CD14-positive monocyte (primary cell): ENCODE measurements at regions of chr10 and their contacts with region 1.

Region 1: GRCh38 chr10:30722956-30723620 is 93.5 kb upstream of the LYZL2 start:
- DNase-seq: no peak
- H3K4me3 ChIP-seq: no peak overlapping the region
- H3K4me3 Mint-ChIP-seq: no peak overlapping the region
- H3K27ac ChIP-seq: no peak overlapping the region
- H3K27ac Mint-ChIP-seq: no peak overlapping the region
- H3K4me1 ChIP-seq: peaks cover 4 to 7% of the 10 kb centered on the region in 2 donors
- H3K4me1 Mint-ChIP-seq: peaks cover 23% of the 10 kb centered on the region
- H3K27me3 ChIP-seq: no peaks in the 10 kb centered on the region
- H3K27me3 Mint-ChIP-seq: peaks cover 0 to 6% (median 3%) of the 10 kb centered on the region in 3 donors
- CTCF ChIP-seq: no peak

Region 2: GRCh38 chr10:31808258-31809218 is 1085.5 kb after region 1 on chr10:
- intact Hi-C with region 1: loop called in 1 of 2 experiments (anchors 5 kb)
- DNase-seq: peak; percentile 30 to 50 (median 42)
- H3K4me3 ChIP-seq: peak overlapping the region; percentile 49 to 91 (median 72)
- H3K4me3 Mint-ChIP-seq: peak overlapping the region; percentile 67 to 90
- H3K27ac ChIP-seq: peak overlapping the region in 1 of 2 donors; percentile 67
- H3K27ac Mint-ChIP-seq: peak overlapping the region in 6 of 7 donors; percentile 61 to 93 (median 82)
- H3K4me1 ChIP-seq: peaks cover 0 to 3% of the 10 kb centered on the region in 2 donors
- H3K4me1 Mint-ChIP-seq: peaks cover 5% of the 10 kb centered on the region
- H3K27me3 ChIP-seq: no peaks in the 10 kb centered on the region
- H3K27me3 Mint-ChIP-seq: peaks cover 0 to 1% (median 0%) of the 10 kb centered on the region in 3 donors
- CTCF ChIP-seq: peak; percentile 77

Region 3: DNA sequence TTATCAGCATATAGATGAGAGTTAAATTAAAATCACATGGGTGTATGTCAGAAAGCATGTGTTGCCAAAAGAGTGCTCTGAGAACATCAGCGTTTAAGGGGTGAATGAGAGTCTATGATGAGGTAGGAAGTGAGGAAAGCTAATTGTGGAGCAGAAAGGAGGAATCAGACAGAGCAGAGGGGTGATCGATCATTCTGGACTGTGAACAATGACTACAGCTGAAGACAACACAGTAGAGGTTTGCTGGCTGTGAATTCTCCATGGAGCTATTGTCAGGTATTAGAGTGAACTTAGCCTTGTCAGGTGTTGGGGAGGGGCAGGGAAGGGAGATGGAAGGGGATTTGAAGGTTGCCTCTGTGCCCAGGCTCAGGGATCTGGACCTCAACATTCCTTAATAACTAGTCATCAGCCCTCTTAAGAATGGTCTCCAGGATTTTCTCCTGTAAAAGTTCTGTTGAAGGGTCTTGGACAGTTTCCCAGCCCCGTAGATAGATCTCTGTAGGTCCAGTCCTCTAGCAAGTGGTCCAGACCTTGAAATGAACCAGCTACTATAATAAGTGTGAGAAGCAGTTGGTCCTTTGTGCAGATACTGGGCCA is 1276.1 kb after region 1 on chr10:
- intact Hi-C with region 1: loop called in 1 of 2 experiments (anchors 10 kb)
- DNase-seq: no peak
- H3K4me3 ChIP-seq: no peak overlapping the region
- H3K4me3 Mint-ChIP-seq: no peak overlapping the region
- H3K27ac ChIP-seq: no peak overlapping the region
- H3K27ac Mint-ChIP-seq: no peak overlapping the region
- H3K4me1 ChIP-seq: peaks cover 2 to 8% of the 10 kb centered on the region in 2 donors
- H3K4me1 Mint-ChIP-seq: peaks cover 15% of the 10 kb centered on the region
- H3K27me3 ChIP-seq: no peaks in the 10 kb centered on the region
- H3K27me3 Mint-ChIP-seq: peaks cover 0 to 7% (median 0%) of the 10 kb centered on the region in 3 donors
- CTCF ChIP-seq: no peak